Sciatic nerve (tissue), 2 donors: ENCODE measurements at regions of chr4 and their contacts with region 1.

Region 1: DNA sequence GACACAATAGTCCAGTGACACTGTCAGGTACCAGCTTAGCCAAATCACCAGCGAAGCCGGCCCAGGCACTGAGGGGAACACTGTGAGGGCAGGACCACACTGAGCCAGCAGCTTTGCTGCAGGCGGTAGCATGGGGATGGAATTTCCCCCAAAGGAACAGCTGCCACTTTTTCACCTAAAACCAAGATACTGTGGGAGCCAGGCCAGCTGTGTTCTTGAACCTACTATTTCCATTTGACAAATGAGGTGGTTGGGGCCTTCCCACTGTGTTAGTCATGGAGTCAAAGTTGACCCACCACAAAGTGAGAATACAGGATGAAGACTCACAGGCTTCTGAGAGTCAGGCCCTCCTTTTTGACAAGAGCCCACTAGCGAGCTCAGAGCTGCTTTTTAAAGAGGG is 70.7 kb upstream of the SH3RF1 start:
- DNase-seq: no peak
- ATAC-seq: no peak

Region 2: GRCh38 chr4:168019019-168019651 is 1322.4 kb before region 1 on chr4:
- intact Hi-C with region 1: loop called (anchors 5 kb)
- DNase-seq: no peak
- ATAC-seq: no peak

Region 3: GRCh38 chr4:168942985-168943384 is 398.5 kb before region 1 on chr4:
- intact Hi-C with region 1: no loop called
- DNase-seq: no peak
- ATAC-seq: no peak